Left cardiac atrium (tissue), 4 donors: ENCODE measurements at regions of chr2 and their contacts with region 1.

Region 1: DNA sequence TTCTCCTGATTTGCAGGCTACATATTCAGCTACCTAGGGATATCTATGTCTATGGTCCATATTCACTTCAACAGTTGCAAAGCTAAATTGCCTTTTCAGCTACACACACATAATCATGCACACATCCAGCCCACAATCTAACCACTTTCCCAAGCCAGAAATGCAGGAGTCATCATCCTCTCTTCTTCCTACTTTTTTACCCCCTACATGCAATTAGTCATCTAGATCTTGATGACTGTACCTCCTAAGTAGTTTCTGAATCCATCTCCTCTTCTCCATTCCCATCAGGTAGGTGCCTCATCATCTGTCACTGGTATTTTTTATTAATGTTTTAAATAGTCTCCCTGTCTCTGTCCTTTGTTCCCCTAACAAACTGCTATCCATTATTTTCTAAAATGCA is 23.7 kb upstream of the SPRED2 start:
- DNase-seq: no peak
- ATAC-seq: no peak

Region 2: DNA sequence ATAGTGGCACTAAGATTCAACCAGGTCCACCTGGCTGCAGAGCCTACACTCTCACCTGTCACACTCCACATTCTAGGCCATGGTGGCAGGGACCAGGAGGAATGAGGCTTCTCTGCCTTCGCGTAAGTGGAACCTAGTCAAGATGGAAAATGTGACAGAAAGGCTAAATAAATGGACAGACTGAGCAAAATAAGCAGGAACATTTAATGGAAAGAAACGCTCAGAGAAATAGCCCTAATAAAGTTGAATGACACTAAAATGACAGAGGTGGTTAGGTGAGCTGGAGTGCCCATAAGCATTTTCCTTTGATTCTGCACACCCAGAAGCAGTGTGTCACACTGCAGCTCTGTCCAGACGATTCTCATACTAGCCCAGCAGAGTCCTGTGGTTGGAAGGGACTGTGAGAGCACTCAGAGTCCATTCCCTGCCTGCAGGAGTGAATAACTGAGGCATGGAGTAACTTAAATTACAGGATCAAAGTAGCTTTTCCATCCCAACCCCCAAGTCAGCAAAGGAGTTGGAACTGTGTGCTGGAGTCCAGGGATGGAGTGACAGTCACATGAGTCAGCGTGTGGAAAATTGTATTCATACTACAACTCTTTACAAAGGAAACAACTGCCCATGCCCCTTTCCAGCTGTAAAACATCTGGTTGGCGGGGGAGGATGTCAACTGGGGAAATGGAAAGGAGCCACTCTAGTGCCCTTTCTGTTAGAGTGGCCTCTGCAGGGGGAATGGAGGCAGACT is 1107.5 kb before region 1 on chr2:
- intact Hi-C with region 1: no loop called
- DNase-seq: no peak
- ATAC-seq: peak in 1 of 2 donors; percentile 36

Region 3: DNA sequence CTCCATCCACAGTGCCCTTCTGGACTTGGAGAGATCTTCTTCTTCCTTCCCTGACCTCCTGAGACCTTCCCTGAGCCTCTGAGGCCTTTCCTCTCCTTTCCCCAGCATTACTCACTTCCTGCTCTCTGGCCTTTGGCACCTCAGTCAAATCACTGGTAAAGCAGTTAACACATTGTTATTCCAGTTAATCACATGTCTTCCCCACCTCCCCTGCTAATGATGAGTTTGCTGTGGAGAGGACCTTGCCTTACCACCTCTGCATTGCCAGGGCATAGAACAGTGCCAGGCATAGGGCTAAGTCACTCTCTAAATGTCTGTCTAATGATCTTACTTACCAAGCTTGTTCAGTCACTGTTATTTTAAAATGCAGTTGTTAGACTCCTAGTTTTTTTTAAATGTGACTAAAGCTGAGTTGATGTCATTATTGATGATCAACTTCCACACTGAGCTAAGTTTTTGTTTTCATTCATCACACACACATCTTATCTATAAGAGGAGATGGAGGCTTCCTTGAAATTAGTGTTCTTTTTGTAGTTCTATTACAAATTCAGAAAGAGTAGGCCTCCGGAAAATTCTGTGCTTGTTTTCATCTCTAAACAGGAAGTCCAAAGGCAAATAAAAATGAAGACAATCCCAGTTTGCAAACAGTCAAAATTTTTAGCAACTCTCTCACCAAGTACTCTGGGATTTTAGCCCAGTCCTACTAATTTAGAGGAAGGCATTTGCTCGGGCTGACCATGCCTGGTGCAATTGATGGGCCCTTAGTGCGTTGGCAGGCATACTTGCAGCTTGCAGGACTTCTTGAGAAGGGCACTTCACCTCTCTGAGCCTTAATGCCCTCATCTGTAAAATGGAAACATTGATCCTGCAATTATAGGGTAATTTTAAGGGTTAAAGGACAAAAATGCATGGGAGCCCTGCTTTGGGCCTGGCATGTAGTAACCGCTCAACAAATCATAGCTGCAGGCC is 90.1 kb after region 1 on chr2:
- intact Hi-C with region 1: loop called in 1 of 2 experiments (anchors 10 kb)
- DNase-seq: no peak
- ATAC-seq: peak; percentile 70 to 85